PC-3 (cell line): ENCODE measurements at regions of chr1 and their contacts with region 1.

Region 1: GRCh38 chr1:154404984-154405761 is at the start of gene IL6R:
- DNase-seq: peak; percentile 98
- ATAC-seq: peak; percentile 88
- H3K4me3 ChIP-seq: peak within 1 kb of the TSS; percentile 93
- H3K27ac ChIP-seq: peak within 1 kb of the TSS; percentile 93
- H3K4me1 ChIP-seq: peaks cover 30% of the 10 kb centered on the region
- H3K27me3 ChIP-seq: no peaks in the 10 kb centered on the region
- CTCF ChIP-seq: peak; percentile 75
- total RNA-seq, gene IL6R: 16.1 and 43.3 TPM in 2 replicates

Region 2: GRCh38 chr1:154419620-154420571 is 14.7 kb after region 1 on chr1:
- CTCF ChIA-PET with region 1: interaction called, 7 read pairs
- POLR2A ChIA-PET with region 1: no interaction called
- intact Hi-C with region 1: loop called (anchors 1 kb)
- DNase-seq: peak; percentile 91
- ATAC-seq: peak; percentile 33
- H3K4me3 ChIP-seq: peak overlapping the region; percentile 41; the same call in 1 of the 2 replicates
- H3K27ac ChIP-seq: peak overlapping the region; percentile 90
- H3K4me1 ChIP-seq: peaks cover 61% of the 10 kb centered on the region
- H3K27me3 ChIP-seq: no peaks in the 10 kb centered on the region
- CTCF ChIP-seq: no peak

Region 3: GRCh38 chr1:154445040-154445472 is 39.9 kb after region 1 on chr1:
- CTCF ChIA-PET with region 1: no interaction called
- POLR2A ChIA-PET with region 1: no interaction called
- intact Hi-C with region 1: loop called (anchors 5 kb)
- DNase-seq: peak; percentile 74
- ATAC-seq: peak; percentile 97
- H3K4me3 ChIP-seq: no peak overlapping the region
- H3K27ac ChIP-seq: no peak overlapping the region
- H3K4me1 ChIP-seq: peaks cover 16% of the 10 kb centered on the region
- H3K27me3 ChIP-seq: no peaks in the 10 kb centered on the region
- CTCF ChIP-seq: no peak

Region 4: DNA sequence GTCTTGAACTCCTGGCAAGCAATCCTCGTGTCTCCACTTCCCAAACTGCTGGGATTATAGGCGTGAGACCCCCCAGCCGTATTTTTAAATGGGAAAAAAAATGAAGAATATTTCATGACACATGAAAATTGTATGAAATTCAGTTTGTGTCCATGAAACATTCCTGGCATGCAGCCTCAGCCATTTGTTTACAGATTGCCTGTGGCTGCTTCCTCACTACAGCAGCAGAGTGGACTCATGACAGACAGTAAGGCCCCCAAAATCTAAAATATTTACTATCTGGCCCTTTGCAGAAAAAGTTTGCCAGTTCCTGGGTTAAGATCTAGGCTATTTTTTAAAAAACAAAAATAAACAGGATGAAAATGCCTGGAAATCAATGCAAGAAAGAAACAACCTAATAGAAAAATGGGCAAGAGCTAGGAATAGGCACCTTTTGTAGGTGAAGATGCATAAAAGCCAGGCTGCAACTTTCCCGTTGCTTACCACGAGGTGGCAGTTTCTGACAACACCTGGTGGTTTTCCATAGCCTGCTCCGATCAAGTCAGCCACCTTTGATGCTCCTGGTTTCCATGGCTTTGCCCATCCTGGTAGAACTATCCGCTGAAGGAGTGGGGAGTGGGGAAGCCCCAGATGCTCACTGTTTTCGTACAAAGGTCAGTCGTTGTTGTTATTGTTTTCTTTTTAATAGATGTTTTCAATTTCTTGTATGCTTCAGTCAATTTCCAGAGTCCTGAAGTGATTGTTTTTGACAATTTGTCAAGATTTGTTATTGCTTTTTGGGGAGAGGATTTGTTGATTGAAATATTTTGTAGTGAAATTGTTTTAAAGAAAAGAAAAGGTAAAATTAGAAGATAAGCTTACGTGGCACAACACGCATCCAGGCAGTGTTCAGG is 129.0 kb after region 1 on chr1:
- CTCF ChIA-PET with region 1: no interaction called
- POLR2A ChIA-PET with region 1: no interaction called
- intact Hi-C with region 1: loop called (anchors 10 kb)
- DNase-seq: peak; percentile 76
- ATAC-seq: peak; percentile 92
- H3K4me3 ChIP-seq: no peak overlapping the region
- H3K27ac ChIP-seq: no peak overlapping the region
- H3K4me1 ChIP-seq: no peaks in the 10 kb centered on the region
- H3K27me3 ChIP-seq: peaks cover 35% of the 10 kb centered on the region
- CTCF ChIP-seq: peak; percentile 86